Vagina (tissue), 2 donors: ENCODE measurements at regions of chr5 and their contacts with region 1.

Region 1: GRCh38 chr5:157511651-157512644 is 51.9 kb downstream of the NIPAL4 start:
- DNase-seq: peak in 1 of 2 donors; percentile 97
- H3K4me3 ChIP-seq: no peak overlapping the region
- H3K27ac ChIP-seq: peak overlapping the region; percentile 80
- H3K4me1 ChIP-seq: peaks cover 45% of the 10 kb centered on the region
- H3K27me3 ChIP-seq: no peaks in the 10 kb centered on the region
- CTCF ChIP-seq: no peak
- POLR2A ChIP-seq: no peak

Region 2: GRCh38 chr5:157575381-157576020 is 63.6 kb after region 1 on chr5 and contains the start of gene ADAM19:
- intact Hi-C with region 1: loop called (anchors 5 kb)
- DNase-seq: no peak
- H3K4me3 ChIP-seq: peak within 1 kb of the TSS; percentile 69 to 93
- H3K27ac ChIP-seq: peak within 1 kb of the TSS; percentile 87
- H3K4me1 ChIP-seq: peaks cover 20% of the 10 kb centered on the region
- H3K27me3 ChIP-seq: no peaks in the 10 kb centered on the region
- CTCF ChIP-seq: peak in 1 of 3 experiments; percentile 45
- POLR2A ChIP-seq: peak in 1 of 2 donors; percentile 63
- total RNA-seq, gene ADAM19: 4.9 TPM

Region 3: DNA sequence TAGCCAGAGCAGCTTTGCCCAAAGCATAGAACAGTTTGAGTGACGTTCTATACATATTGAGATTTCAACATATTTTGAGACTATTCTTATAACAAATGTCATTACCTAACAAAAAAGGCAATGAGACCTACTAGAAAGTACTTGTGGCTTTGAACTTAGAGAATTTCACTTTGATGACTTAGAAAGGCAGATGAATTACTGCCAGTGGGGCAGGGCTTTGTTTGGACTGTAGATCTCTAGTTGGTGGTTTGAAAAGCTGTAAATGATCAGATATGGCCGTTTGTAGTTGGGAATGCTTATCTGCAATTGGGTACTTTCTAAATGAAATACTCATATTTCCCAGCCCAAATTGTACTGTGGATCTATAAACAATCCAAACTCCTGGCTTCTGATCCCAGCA is 112.2 kb after region 1 on chr5:
- intact Hi-C with region 1: no loop called
- DNase-seq: no peak
- H3K4me3 ChIP-seq: no peak overlapping the region
- H3K27ac ChIP-seq: no peak overlapping the region
- H3K4me1 ChIP-seq: no peaks in the 10 kb centered on the region
- H3K27me3 ChIP-seq: no peaks in the 10 kb centered on the region
- CTCF ChIP-seq: no peak
- POLR2A ChIP-seq: no peak

Region 4: GRCh38 chr5:157915638-157916037 is 403.7 kb after region 1 on chr5:
- intact Hi-C with region 1: no loop called
- DNase-seq: no peak
- H3K4me3 ChIP-seq: no peak overlapping the region
- H3K27ac ChIP-seq: peak overlapping the region; percentile 18
- H3K4me1 ChIP-seq: peaks cover 57% of the 10 kb centered on the region
- H3K27me3 ChIP-seq: no peaks in the 10 kb centered on the region
- CTCF ChIP-seq: no peak
- POLR2A ChIP-seq: no peak